Activated CD4-positive, alpha-beta T cell treated with anti-CD3 and anti-CD28 coated beads, Interleukin-2, amount 10 ng/mL, durations not matched to agents 24 days and 14 days (primary cell): ENCODE measurements at regions of chr2 and their contacts with region 1.

Region 1: DNA sequence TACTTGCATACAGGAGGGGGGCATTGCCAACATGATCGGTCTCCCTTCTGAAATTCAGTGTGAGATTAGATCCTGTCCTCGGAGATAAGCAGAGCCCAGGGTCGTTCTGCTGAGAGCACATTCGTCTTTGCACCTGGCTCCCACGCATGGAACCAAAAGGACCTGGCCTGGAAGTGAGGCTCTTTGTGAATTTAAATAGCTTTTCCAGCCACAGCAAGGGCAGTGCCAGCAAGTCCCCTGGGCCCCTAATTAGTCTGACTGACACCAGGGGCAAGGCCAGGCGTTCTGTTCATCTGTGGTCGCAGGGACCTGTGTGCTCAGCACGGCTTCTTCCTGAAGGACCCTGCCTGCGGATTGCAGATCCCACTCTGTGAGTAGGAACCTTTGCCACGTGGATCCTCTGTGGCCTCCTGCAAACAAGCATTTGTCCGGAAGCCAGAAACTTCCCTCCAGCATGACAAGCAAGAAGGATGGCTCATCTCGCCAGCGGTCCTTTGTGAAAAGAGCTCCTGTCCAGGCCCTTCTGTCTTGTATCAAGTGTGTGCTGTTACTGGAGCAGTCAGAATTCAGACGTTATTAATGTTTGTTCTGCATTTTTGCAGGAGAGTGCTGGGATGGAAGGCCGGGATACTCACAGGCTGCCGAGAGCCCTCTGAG is 128.7 kb downstream of the TPO start:
- DNase-seq: no peak
- H3K4me3 Mint-ChIP-seq: no peak overlapping the region
- H3K27ac Mint-ChIP-seq: no peak overlapping the region
- H3K4me1 Mint-ChIP-seq: peaks cover 7% of the 10 kb centered on the region
- H3K27me3 Mint-ChIP-seq: no peaks in the 10 kb centered on the region

Region 2: DNA sequence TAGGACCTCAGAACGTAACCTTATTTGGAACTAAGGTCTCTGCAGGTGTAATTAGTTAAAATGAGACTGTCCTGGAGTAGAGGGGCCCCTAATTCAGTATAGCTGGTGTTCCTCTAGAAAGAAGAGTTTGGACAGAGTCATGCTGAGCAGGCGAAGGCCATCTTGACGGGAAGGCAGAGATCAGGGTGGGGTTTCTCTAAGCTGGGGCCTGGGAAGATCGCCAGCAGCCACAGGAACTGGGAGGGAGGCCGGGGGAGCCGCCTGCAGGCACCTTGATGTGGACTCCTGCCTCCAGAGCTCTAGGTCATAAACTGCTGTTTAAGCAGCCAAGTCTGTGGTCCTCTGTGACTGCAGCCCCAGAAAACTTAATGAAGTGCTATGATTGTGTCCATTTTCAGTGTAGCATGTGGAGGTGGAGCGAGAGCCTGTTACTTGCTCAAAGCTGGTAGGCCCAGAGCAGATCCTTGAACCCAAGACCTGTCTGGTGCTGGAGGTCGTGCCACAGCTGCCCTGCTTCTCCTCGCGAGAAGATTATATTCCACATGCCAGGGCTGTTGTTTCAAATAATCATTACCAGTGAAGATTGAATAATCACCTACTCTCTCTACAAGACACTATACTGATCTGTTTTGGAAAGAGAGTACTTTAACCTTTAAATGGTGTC is 22.9 kb before region 1 on chr2:
- intact Hi-C with region 1: no loop called
- DNase-seq: no peak
- H3K4me3 Mint-ChIP-seq: no peak overlapping the region
- H3K27ac Mint-ChIP-seq: no peak overlapping the region
- H3K4me1 Mint-ChIP-seq: peaks cover 22% of the 10 kb centered on the region
- H3K27me3 Mint-ChIP-seq: no peaks in the 10 kb centered on the region

Region 3: GRCh38 chr2:1561811-1562421 is 20.0 kb after region 1 on chr2:
- intact Hi-C with region 1: loop called (anchors 2 kb)
- DNase-seq: no peak
- H3K4me3 Mint-ChIP-seq: no peak overlapping the region
- H3K27ac Mint-ChIP-seq: no peak overlapping the region
- H3K4me1 Mint-ChIP-seq: peaks cover 7% of the 10 kb centered on the region
- H3K27me3 Mint-ChIP-seq: no peaks in the 10 kb centered on the region

Region 4: DNA sequence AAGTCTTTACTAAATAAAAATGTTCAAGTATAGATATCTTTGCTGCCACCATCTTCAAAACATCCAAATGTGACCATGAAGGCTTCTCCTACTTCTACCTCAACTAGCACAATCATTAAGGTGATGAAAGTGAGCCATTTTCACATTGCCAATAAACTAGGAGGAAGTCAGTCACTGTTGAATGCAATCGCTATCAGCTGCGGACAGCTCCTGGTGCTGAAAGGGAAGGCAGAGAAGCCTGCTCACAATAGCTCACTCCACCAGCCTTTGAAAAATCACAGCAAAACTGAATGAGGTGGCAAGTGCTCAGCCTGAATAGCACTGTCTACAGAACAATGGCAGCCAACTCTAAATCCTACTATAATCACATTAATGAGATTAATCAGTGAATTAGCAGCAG is 786.9 kb after region 1 on chr2:
- intact Hi-C with region 1: no loop called
- DNase-seq: peak; percentile 61
- H3K4me3 Mint-ChIP-seq: no peak overlapping the region
- H3K27ac Mint-ChIP-seq: no peak overlapping the region
- H3K4me1 Mint-ChIP-seq: no peaks in the 10 kb centered on the region
- H3K27me3 Mint-ChIP-seq: no peaks in the 10 kb centered on the region